ENCODE measurements at regions of chr9 and their contacts with region 1.

Region 1: GRCh38 chr9:78023003-78023741 is 8.4 kb downstream of the GNAQ start:
- DNase-seq: peak; percentile 64
- ATAC-seq: peak; percentile 93
- H3K4me3 ChIP-seq: peak overlapping the region in 2 of 3 experiments; percentile 14 to 21; a peak in 3 of 6 replicates
- H3K27ac ChIP-seq: peak overlapping the region; percentile 26
- H3K4me1 ChIP-seq: peaks cover 39% of the 10 kb centered on the region
- H3K27me3 ChIP-seq: no peaks in the 10 kb centered on the region
- CTCF ChIP-seq: no peak
- EP300 ChIP-seq: no peak
- POLR2A ChIP-seq: no peak
- RAD21 ChIP-seq: no peak

Region 2: DNA sequence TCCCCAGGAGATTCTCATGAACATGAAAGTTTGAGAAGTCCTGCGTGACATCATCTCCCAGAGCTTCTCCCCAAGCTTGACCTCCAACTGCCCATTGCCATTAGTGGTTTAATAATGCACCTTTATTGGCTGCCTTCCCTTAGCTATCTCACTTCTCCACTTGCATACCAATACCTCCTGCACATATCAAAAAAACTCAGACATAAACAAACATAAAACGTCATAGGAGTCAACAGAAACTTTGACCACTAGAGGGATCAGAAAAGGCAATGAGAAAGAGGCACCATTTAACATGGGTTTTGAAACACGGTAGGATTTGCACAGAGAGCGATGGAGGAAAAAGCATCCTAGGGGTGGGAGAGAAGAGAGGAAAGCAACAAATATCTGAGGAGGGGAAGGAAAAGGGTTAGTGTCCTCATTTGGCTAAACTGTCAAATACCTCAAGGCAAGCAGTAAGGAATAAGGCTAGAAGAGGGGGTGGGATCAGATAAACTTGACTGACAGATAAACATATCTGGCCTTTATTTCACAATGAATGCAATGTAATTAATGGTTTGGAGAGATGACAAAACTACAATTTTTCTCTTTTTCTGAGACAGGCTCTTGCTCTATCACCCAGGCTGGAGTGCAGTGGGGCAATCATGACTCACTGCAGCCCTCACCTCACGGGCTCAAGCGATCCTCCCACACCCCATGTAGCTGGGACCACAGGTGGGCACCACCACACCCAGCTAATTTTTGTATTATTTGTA is 18.5 kb before region 1 on chr9:
- CTCF ChIA-PET with region 1: no interaction called
- POLR2A ChIA-PET with region 1: no interaction called
- in situ Hi-C with region 1: no loop called
- intact Hi-C with region 1: loop called (anchors 2 kb)
- DNase-seq: peak; percentile 85
- ATAC-seq: peak; percentile 93
- H3K4me3 ChIP-seq: no peak overlapping the region
- H3K27ac ChIP-seq: peak overlapping the region; percentile 32
- H3K4me1 ChIP-seq: peaks cover 69% of the 10 kb centered on the region
- H3K27me3 ChIP-seq: no peaks in the 10 kb centered on the region
- CTCF ChIP-seq: peak; percentile 49
- EP300 ChIP-seq: peak in 1 of 2 experiments; percentile 56; a peak in 2 of 4 replicates
- POLR2A ChIP-seq: no peak
- RAD21 ChIP-seq: 0 out of 2 replicates have a peak, but pooled peaks have one; percentile 30